Heart right ventricle (tissue), 16 donors: ENCODE measurements at regions of chr19 and their contacts with region 1.

Region 1: DNA sequence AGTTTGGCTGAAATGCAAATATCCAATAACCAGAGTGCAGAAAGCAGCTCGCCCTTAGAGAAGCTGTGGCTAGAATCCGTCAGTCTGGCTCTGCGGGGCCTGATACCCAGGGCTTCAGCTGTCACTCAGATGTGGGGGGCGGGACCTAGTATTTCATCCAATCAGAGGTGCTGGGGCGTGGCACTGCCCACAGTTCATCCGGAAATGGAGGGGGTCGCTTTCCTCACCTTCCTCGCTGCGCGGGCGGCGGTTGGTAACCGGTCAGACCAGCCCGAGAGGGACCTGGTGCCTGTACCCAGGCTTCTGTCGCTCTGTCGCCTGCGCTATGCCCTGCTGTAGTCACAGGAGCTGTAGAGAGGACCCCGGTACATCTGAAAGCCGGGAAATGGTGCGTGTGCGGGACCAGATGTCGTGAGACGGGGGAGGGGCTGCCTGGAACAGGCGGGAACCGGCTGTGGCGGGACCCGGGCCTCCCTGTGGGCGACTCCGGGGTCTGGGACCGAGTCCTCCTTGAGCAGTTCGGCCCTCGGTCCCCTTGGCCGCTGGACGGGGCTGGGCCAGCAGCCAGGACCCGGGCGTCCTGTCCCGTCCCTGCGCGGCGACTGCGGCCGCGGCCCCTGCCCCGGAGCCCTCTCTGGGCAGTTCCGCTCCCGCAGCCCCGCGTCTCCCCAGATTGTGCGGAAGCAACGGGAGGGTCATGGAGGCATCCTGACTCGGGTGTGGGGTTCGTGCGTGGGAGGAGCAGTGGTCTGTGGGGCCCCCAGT is at the start of gene ZNF700:
- DNase-seq: peak; percentile 91 to 97
- ATAC-seq: peak; percentile 97 to 99 (median 98)
- H3K4me3 ChIP-seq: peak within 1 kb of the TSS; percentile 68 to 99 (median 91)
- H3K27ac ChIP-seq: peak within 1 kb of the TSS; percentile 84 to 98 (median 93)
- H3K4me1 ChIP-seq: peaks cover 0 to 33% (median 19%) of the 10 kb centered on the region in 9 donors
- H3K27me3 ChIP-seq: no peaks in the 10 kb centered on the region
- CTCF ChIP-seq: no peak
- total RNA-seq, gene ZNF700: 2.8 to 5.0 (median 4.4) TPM

Region 2: GRCh38 chr19:11747277-11747676 is 177.8 kb before region 1 on chr19:
- intact Hi-C with region 1: no loop called
- DNase-seq: no peak
- ATAC-seq: no peak
- H3K4me3 ChIP-seq: no peak overlapping the region
- H3K27ac ChIP-seq: no peak overlapping the region
- H3K4me1 ChIP-seq: no peaks in the 10 kb centered on the region
- H3K27me3 ChIP-seq: no peaks in the 10 kb centered on the region
- CTCF ChIP-seq: no peak

Region 3: DNA sequence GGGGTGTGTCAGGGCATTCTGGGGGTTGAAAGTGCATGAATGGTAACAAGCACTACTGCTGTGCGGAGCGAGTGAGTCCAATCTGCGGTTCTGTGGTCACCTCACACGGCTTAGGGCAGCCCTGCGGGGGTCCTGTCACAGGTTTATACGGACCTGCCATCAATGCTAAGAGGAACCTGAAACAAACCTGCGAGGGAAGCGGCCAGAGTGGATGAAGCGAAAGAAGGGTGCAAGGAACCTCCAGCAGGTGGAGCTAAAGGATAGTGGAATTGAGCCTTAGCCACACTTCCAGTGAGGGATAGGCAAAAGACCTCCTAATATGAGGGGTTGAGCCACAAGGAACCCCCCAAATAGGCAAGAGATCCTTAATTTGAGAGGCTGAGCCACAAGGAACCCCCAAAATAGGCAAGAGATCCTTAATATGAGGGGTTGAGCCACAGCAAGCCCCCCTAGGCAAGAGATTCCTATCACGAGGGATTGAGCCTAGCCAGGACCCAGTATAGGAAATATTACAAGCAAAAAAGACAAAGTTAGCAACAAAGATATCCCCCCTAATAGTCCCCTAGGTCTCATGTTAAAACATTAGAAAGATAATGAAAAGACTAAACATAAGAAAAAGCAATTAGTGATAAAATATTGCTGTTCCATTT is 43.8 kb before region 1 on chr19:
- intact Hi-C with region 1: loop called in 2 of 10 experiments (anchors 5 kb)
- DNase-seq: peak; percentile 11 to 53
- ATAC-seq: peak; percentile 64 to 86 (median 72)
- H3K4me3 ChIP-seq: no peak overlapping the region
- H3K27ac ChIP-seq: no peak overlapping the region
- H3K4me1 ChIP-seq: peaks cover 0 to 5% (median 0%) of the 10 kb centered on the region in 9 donors
- H3K27me3 ChIP-seq: no peaks in the 10 kb centered on the region
- CTCF ChIP-seq: peak; percentile 41 to 80 (median 72)

Region 4: DNA sequence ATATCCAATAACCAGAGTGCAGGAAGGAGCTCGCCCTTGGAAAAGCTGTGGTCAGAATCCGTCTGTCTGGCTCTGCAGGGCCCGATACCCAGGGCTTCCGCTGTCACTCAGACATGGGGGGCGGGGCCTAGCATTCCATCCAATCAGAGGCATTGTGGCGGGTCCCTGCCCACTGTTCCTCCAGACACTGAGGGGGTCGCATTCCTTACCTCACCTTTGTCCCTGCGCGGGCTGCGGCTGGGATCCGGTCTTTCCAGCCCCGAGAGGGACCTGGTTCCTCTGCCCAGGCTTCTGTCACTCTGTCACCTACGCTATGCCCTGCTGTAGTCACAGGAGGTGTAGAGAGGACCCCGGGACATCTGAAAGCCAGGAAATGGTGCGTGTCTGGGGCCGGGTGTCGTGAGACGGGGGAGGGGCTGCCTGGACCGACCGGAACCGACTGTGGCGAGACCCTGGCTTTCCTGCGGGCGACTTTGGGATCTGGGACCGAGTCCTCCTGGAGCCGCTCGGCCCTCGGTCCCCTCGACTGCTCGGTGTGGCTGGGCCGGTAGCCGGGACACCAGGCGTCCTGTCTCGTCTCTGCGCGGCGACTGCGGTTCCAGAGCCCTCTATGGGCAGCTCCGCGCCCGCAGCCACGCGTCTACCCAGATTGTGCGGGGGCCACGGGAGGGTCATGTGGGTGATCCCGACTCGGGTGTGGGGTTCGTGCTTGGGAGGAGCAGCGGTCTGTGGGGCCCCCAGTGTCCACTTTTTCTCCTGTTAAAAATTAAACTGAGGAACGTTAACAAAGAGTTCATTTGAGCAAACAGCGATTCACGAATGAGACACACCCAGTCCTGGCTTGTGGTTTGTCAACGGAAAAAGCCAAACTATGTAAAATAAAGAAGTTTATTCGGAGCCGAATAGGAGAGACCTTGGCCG is 37.2 kb before region 1 on chr19 and contains the start of gene ZNF69:
- intact Hi-C with region 1: loop called in 2 of 10 experiments (anchors 5 kb)
- DNase-seq: peak; percentile 90 to 91
- ATAC-seq: peak; percentile 95 to 100 (median 99)
- H3K4me3 ChIP-seq: peak within 1 kb of the TSS; percentile 56 to 83 (median 80)
- H3K27ac ChIP-seq: peak within 1 kb of the TSS in 9 of 10 donors; percentile 74 to 90 (median 83)
- H3K4me1 ChIP-seq: peaks cover 3 to 18% (median 12%) of the 10 kb centered on the region in 9 donors
- H3K27me3 ChIP-seq: no peaks in the 10 kb centered on the region
- CTCF ChIP-seq: peak in 4 of 9 donors; percentile 14 to 51 (median 40)
- total RNA-seq, gene ZNF69: 1.6 to 5.1 (median 4.3) TPM

Region 5: GRCh38 chr19:11964858-11965645 is 40.0 kb after region 1 on chr19 and contains the start of gene ZNF763:
- intact Hi-C with region 1: loop called in 2 of 10 experiments (anchors 2 kb)
- DNase-seq: peak; percentile 92 to 95
- ATAC-seq: peak; percentile 96 to 99 (median 99)
- H3K4me3 ChIP-seq: peak within 1 kb of the TSS; percentile 55 to 94 (median 87)
- H3K27ac ChIP-seq: peak within 1 kb of the TSS; percentile 88 to 98 (median 95)
- H3K4me1 ChIP-seq: peaks cover 5 to 25% (median 17%) of the 10 kb centered on the region in 9 donors
- H3K27me3 ChIP-seq: no peaks in the 10 kb centered on the region
- CTCF ChIP-seq: no peak
- total RNA-seq, gene ZNF763: 1.7 to 7.1 (median 4.8) TPM

Region 6: GRCh38 chr19:11995174-11995573 is 70.1 kb after region 1 on chr19:
- intact Hi-C with region 1: no loop called
- DNase-seq: no peak
- ATAC-seq: no peak
- H3K4me3 ChIP-seq: no peak overlapping the region
- H3K27ac ChIP-seq: no peak overlapping the region
- H3K4me1 ChIP-seq: peaks cover 0 to 4% (median 0%) of the 10 kb centered on the region in 9 donors
- H3K27me3 ChIP-seq: no peaks in the 10 kb centered on the region
- CTCF ChIP-seq: no peak